Right lobe of liver (tissue), 6 donors: ENCODE measurements at regions of chr19 and their contacts with region 1.

Region 1: DNA sequence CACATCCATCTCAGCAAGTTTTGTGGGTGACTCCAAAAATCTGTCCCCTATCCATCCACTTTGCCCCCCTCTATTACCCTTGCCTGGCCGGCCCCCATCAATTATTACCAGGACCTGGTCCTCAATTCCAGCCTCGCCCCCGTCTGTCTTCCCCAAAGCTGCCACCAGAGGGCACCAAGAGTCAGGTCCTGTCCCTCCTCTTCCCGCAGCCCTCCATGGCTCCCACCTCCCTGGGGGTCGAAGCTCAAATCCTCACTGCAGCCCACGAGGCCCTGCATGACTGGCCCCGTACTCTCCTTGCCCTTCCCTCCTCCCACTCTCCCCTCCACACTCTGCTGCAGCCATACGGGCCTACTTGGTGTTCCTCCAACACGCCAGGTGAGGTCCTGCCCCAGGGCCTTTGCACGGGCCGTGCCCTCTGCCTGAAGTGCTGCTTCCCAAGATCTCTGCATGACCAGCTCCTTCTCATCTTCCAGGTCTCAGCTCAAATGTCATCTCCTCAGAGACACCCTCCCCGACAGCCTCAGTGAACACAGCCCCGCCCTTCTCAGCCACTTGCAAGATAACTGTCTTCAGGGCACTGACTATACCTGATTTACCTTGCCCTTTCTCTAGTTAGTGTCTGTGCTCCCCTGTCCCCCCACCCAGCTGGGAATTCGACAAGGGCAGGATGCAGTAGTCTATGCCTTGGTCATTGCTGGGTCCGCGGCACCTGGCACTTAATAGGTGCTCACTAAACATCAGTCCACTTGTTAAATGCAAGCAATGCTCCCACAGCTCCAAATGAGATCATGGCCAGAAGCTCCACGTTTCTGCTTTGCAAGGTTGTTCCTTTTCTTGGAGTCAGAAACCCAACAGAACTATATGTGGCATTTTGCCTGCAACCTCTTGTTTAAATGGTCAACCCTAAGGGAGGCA is 16.8 kb upstream of the SEMA6B start:
- DNase-seq: peak; percentile 62 to 78 (median 75)
- ATAC-seq: peak; percentile 63 to 83 (median 74)
- H3K4me3 ChIP-seq: no peak overlapping the region
- H3K27ac ChIP-seq: no peak overlapping the region
- H3K4me1 ChIP-seq: no peaks in the 10 kb centered on the region
- H3K27me3 ChIP-seq: peaks cover 0 to 5% of the 10 kb centered on the region in 2 donors
- CTCF ChIP-seq: peak; percentile 64 to 76 (median 72)
- POLR2A ChIP-seq: no peak

Region 2: DNA sequence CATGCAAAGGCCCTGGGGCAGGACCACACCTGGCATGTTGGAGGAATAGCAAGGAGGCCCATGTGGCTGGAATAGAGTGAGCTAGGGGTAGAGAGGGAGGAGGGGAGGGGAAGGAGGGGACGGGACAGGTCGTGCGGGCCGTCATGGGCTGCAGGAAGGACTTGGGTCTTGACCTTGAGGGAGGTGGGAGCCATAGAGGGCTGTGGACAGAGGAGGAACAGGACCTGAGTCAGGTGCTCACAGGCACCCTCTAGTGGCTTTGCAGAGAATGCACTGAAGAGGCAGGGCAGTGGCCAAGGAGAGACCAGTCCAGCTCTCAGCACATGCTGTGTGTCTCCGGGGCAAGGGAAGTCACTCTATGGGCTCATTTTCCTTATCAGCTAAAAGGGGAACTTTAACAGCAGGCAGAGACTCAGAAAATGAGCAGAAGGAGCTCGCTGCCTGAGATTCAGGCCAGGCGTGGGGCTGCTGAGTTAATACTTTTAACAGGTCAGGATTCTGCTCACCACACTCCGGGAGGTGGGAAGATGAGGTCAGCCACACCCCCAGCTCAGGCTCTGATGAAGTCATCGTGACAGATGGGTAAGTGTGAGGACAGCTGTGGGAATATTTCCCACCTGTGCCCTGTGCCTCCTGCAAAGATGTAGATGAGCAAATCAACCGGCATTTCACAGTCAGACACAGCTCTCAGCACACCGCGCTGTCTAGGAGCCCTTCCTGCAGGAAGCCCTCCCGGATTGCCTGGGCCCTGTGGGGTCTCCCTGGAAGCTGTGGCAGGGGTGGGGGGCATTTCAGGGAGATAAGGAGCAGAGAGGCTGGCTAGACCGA is 57.1 kb after region 1 on chr19:
- intact Hi-C with region 1: loop called (anchors 5 kb)
- DNase-seq: peak; percentile 61 to 74 (median 74)
- ATAC-seq: peak; percentile 82 to 93 (median 88)
- H3K4me3 ChIP-seq: no peak overlapping the region
- H3K27ac ChIP-seq: no peak overlapping the region
- H3K4me1 ChIP-seq: peaks cover 0 to 8% (median under 1%) of the 10 kb centered on the region in 4 donors
- H3K27me3 ChIP-seq: no peaks in the 10 kb centered on the region
- CTCF ChIP-seq: peak; percentile 75 to 83 (median 78)
- POLR2A ChIP-seq: no peak

Region 3: DNA sequence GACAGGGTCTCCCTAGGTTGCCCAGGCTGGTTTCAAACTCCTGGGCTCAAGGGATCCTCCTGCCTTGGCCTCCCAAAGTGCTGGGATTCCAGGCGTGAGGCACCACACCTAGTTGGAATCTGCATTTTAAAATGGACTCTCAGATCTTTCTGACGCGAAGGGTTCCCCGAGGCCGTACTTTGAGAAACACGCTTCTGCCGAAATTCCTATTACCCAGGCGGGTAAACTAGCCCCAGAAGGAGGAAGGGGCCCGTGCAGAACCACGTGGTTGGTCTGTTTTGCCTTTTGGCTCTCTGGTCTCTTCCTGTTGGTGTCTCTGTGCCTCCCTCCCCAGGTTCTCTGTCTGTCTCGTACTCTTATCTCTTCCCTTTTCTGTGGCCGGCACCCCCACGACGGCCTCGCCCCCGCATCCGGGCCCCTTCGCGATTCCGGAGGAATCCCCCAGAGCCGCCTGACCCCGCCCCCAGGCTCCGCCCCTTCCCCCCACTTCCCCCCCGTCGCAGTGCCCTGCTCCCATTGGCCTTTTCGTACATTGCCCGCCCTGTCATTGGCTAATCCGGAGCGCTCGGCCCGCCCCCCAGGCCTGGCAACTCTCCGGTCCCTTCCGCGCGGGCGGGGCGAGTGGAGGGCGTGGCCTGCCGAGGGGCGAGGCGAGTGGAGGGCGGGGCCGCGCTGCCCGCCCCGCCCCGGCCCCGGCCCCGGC is 62.7 kb after region 1 on chr19 and contains the start of gene TNFAIP8L1:
- intact Hi-C with region 1: loop called (anchors 5 kb)
- DNase-seq: peak; percentile 97 to 98 (median 97)
- ATAC-seq: peak; percentile 81 to 94 (median 90)
- H3K4me3 ChIP-seq: peak within 1 kb of the TSS; percentile 88 to 99 (median 96)
- H3K27ac ChIP-seq: peak within 1 kb of the TSS; percentile 28 to 75 (median 51)
- H3K4me1 ChIP-seq: peaks cover 0 to 30% (median 14%) of the 10 kb centered on the region in 4 donors
- H3K27me3 ChIP-seq: no peaks in the 10 kb centered on the region
- CTCF ChIP-seq: no peak
- POLR2A ChIP-seq: no peak
- total RNA-seq, gene TNFAIP8L1: 16.6 to 26.4 (median 22.8) TPM

Region 4: GRCh38 chr19:4676955-4677731 is 100.9 kb after region 1 on chr19:
- intact Hi-C with region 1: no loop called
- DNase-seq: no peak
- ATAC-seq: peak; percentile 64 to 70 (median 65)
- H3K4me3 ChIP-seq: no peak overlapping the region
- H3K27ac ChIP-seq: no peak overlapping the region
- H3K4me1 ChIP-seq: no peaks in the 10 kb centered on the region
- H3K27me3 ChIP-seq: no peaks in the 10 kb centered on the region
- CTCF ChIP-seq: peak; percentile 45 to 59 (median 53)
- POLR2A ChIP-seq: no peak